ENCODE measurements at regions of chr2 and their contacts with region 1.

Region 1: DNA sequence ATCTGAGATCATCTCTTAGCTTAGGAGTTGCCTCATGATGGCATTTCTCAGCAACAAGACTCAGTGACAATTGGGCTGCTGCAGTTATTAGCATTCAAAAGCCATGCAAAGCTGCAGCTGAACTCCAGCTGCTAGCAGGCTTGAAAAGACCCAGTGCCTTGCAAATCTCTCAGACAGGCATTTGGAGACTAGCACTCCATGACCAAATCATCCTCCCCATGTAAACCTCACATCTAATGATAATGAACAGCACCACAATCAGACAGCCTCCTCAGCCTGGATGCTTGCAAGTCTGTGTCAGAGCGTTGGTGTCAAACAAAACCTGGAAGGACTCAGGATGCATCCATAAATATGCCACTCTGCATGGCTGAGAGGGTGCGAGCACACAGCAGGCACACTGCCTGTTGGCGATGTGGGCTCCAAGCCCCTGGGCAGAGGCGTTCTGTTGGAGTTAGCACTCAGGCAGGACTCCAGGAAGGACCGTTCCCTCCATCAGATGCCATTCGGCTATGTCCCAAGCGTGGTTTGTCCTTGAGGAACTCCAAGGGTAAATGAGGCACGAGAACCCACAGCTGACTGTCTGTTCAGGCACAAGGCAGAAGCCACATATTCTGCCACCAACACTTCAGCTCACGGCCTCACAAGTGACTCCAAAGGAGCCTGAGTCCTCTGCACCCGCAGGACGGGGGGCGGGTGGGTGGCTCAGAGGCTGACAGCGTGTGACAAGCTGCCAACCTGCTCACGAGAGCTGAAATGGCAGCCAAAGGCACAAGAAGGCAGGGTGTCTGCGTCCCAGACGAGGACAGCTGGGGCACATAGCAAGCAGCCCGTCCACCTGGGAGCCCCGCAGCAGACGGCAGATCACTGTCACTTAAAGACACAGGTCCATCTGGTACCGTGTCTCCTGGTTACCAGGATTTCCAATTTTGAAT is 183.8 kb downstream of the MYT1L start:
- DNase-seq: peak in 1 of 5 donors; percentile 49
- ATAC-seq: peak in 3 of 4 donors; percentile 26 to 63 (median 50)
- H3K4me3 ChIP-seq: peak overlapping the region in 1 of 12 donors; percentile 1
- H3K27ac ChIP-seq: no peak overlapping the region
- H3K4me1 ChIP-seq: peaks cover 0 to 7% (median 0%) of the 10 kb centered on the region in 12 donors
- H3K27me3 ChIP-seq: peaks cover 0 to 6% (median 0%) of the 10 kb centered on the region in 9 donors
- CTCF ChIP-seq: no peak
- POLR2A ChIP-seq: no peak

Region 2: DNA sequence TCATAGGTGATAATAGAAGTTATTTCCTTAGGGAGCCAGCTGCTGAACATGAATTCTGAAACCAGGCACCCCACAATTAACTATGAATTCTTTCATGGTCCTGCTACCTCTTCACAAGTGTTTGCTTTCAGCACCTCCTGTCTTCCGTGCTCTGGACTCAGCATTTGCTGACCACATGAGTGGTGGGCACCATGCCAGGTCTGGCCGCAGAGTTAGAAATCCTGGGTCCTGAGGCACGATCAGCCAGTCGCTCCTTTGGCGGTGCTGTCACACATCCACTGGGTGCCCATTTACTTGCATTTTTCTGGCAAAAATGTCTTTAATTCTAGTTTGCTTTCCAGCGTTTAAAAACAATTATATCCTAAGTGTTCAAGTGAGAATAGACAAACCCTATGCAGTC is 206.6 kb before region 1 on chr2:
- intact Hi-C with region 1: no loop called
- DNase-seq: peak; percentile 48 to 82 (median 68)
- ATAC-seq: peak in 2 of 4 donors; percentile 42 to 65
- H3K4me3 ChIP-seq: no peak overlapping the region
- H3K27ac ChIP-seq: no peak overlapping the region
- H3K4me1 ChIP-seq: peaks cover 0 to 4% (median 0%) of the 10 kb centered on the region in 12 donors
- H3K27me3 ChIP-seq: no peaks in the 10 kb centered on the region
- CTCF ChIP-seq: peak in 1 of 12 donors; percentile 24
- POLR2A ChIP-seq: no peak

Region 3: GRCh38 chr2:2260691-2261268 is 113.5 kb after region 1 on chr2:
- intact Hi-C with region 1: no loop called
- DNase-seq: no peak
- ATAC-seq: no peak
- H3K4me3 ChIP-seq: no peak overlapping the region
- H3K27ac ChIP-seq: no peak overlapping the region
- H3K4me1 ChIP-seq: no peaks in the 10 kb centered on the region
- H3K27me3 ChIP-seq: peaks cover 0 to 6% (median 0%) of the 10 kb centered on the region in 9 donors
- CTCF ChIP-seq: no peak
- POLR2A ChIP-seq: no peak

Region 4: GRCh38 chr2:2271469-2271941 is 124.3 kb after region 1 on chr2:
- intact Hi-C with region 1: loop called in 1 of 10 experiments (anchors 10 kb)
- DNase-seq: peak in 4 of 5 donors; percentile 29 to 63 (median 44)
- ATAC-seq: peak; percentile 89 to 96 (median 92)
- H3K4me3 ChIP-seq: no peak overlapping the region
- H3K27ac ChIP-seq: peak overlapping the region in 2 of 12 donors; percentile 51 to 55
- H3K4me1 ChIP-seq: peaks cover 0 to 9% (median 0%) of the 10 kb centered on the region in 12 donors
- H3K27me3 ChIP-seq: no peaks in the 10 kb centered on the region
- CTCF ChIP-seq: peak in 2 of 12 donors; percentile 12 to 20
- POLR2A ChIP-seq: no peak

Measured in heart left ventricle (tissue), 16 donors.